ENCODE measurements at regions of chr2 and their contacts with region 1.

Region 1: GRCh38 chr2:25951071-25951547 is 31.2 kb downstream of the KIF3C start:
- DNase-seq: peak; percentile 78
- ATAC-seq: peak; percentile 85
- H3K4me3 ChIP-seq: no peak overlapping the region
- H3K4me3 Mint-ChIP-seq: no peak overlapping the region
- H3K27ac ChIP-seq: no peak overlapping the region
- H3K27ac Mint-ChIP-seq: no peak overlapping the region
- H3K4me1 ChIP-seq: no peaks in the 10 kb centered on the region
- H3K4me1 Mint-ChIP-seq: no peaks in the 10 kb centered on the region
- H3K27me3 ChIP-seq: no peaks in the 10 kb centered on the region
- H3K27me3 Mint-ChIP-seq: no peaks in the 10 kb centered on the region
- CTCF ChIP-seq: peak; percentile 92

Region 2: GRCh38 chr2:25115902-25116301 is 835.2 kb before region 1 on chr2:
- CTCF ChIA-PET with region 1: no interaction called
- POLR2A ChIA-PET with region 1: no interaction called
- intact Hi-C with region 1: no loop called
- DNase-seq: no peak
- ATAC-seq: no peak
- H3K4me3 ChIP-seq: no peak overlapping the region
- H3K4me3 Mint-ChIP-seq: no peak overlapping the region
- H3K27ac ChIP-seq: no peak overlapping the region
- H3K27ac Mint-ChIP-seq: no peak overlapping the region
- H3K4me1 ChIP-seq: no peaks in the 10 kb centered on the region
- H3K4me1 Mint-ChIP-seq: no peaks in the 10 kb centered on the region
- H3K27me3 ChIP-seq: no peaks in the 10 kb centered on the region
- H3K27me3 Mint-ChIP-seq: peaks cover 4% of the 10 kb centered on the region
- CTCF ChIP-seq: no peak

Region 3: DNA sequence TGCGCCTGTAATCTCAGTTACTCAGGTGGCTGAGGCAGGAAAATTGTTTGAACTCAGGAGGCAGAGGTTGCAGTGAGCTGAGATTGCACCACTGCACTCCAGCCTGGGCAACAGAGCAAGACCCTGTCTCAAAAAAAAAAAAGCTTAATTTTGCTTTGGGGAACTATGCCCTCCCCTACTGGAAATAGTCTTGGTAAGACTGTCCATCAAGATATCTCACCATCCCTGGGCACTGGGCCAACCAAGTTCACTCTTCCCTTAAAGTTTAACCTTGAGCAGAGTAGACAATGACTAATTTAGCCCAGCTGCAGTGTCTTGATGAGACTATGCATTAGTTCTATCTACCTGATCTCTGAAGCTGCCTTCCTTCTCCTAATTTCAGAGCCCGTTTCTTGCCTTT is 117.5 kb before region 1 on chr2:
- CTCF ChIA-PET with region 1: no interaction called
- POLR2A ChIA-PET with region 1: no interaction called
- intact Hi-C with region 1: no loop called
- DNase-seq: no peak
- ATAC-seq: no peak
- H3K4me3 ChIP-seq: no peak overlapping the region
- H3K4me3 Mint-ChIP-seq: no peak overlapping the region
- H3K27ac ChIP-seq: no peak overlapping the region
- H3K27ac Mint-ChIP-seq: no peak overlapping the region
- H3K4me1 ChIP-seq: no peaks in the 10 kb centered on the region
- H3K4me1 Mint-ChIP-seq: peaks cover 10% of the 10 kb centered on the region
- H3K27me3 ChIP-seq: no peaks in the 10 kb centered on the region
- H3K27me3 Mint-ChIP-seq: no peaks in the 10 kb centered on the region
- CTCF ChIP-seq: no peak

Region 4: DNA sequence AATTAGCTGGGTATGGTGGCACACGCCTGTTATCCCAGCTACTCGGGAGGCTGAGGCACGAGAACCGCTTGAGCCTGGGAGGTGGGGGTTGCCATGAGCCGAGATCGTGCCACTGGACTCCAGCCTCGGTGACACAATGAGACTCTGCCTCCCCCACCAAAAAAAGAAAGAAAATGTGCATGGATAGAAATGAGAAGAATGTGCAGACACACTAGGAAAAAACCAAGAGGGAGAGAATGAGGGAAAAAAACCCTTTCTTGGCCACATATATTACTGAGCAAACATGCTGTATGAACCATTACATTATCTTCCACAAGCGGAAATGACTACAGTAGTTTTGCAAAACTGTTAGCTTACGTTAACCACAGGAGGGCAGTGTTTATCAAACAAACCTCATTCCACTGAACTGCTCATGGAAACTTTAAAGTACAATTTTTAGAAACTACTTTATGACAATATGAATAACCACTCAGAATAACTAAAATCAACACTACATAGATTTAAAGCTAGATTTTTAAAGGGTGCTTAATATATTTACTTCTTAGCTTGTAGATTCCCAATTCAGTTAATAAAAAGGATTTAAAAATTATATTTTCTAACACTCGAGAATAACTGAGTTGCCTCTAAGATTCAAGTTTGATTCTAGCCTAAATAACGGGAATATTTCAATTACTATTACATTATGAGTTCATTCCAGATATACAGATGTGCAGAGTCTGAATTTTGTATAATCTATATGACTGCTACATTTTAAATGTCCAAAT is 99.2 kb before region 1 on chr2:
- CTCF ChIA-PET with region 1: interaction called, 29 read pairs
- POLR2A ChIA-PET with region 1: no interaction called
- intact Hi-C with region 1: loop called (anchors 1 kb)
- DNase-seq: peak; percentile 71
- ATAC-seq: peak; percentile 95
- H3K4me3 ChIP-seq: no peak overlapping the region
- H3K4me3 Mint-ChIP-seq: peak overlapping the region; percentile 40
- H3K27ac ChIP-seq: peak overlapping the region in 1 of 2 donors; percentile 45
- H3K27ac Mint-ChIP-seq: peak overlapping the region; percentile 39
- H3K4me1 ChIP-seq: peaks cover 11 to 14% of the 10 kb centered on the region in 2 donors
- H3K4me1 Mint-ChIP-seq: peaks cover 32% of the 10 kb centered on the region
- H3K27me3 ChIP-seq: no peaks in the 10 kb centered on the region
- H3K27me3 Mint-ChIP-seq: no peaks in the 10 kb centered on the region
- CTCF ChIP-seq: peak; percentile 83

Region 5: GRCh38 chr2:25982273-25982967 is 31.3 kb after region 1 on chr2 and contains the start of gene KIF3C:
- CTCF ChIA-PET with region 1: interaction called, 3 read pairs
- POLR2A ChIA-PET with region 1: no interaction called
- intact Hi-C with region 1: loop called (anchors 1 kb)
- DNase-seq: peak; percentile 76
- ATAC-seq: peak; percentile 87
- H3K4me3 ChIP-seq: peak within 1 kb of the TSS; percentile 36 to 81 (median 70)
- H3K4me3 Mint-ChIP-seq: peak within 1 kb of the TSS; percentile 88
- H3K27ac ChIP-seq: peak within 1 kb of the TSS in 1 of 2 donors; percentile 53
- H3K27ac Mint-ChIP-seq: peak within 1 kb of the TSS; percentile 61
- H3K4me1 ChIP-seq: peaks cover 6 to 14% of the 10 kb centered on the region in 2 donors
- H3K4me1 Mint-ChIP-seq: peaks cover 8% of the 10 kb centered on the region
- H3K27me3 ChIP-seq: peaks cover 0 to 3% (median 0%) of the 10 kb centered on the region in 4 experiments
- H3K27me3 Mint-ChIP-seq: no peaks in the 10 kb centered on the region
- CTCF ChIP-seq: no peak
- total RNA-seq, gene KIF3C: 4.0 and 6.9 TPM in 2 replicates

Region 6: GRCh38 chr2:26144953-26145680 is 194.0 kb after region 1 on chr2:
- CTCF ChIA-PET with region 1: interaction called, 30 read pairs
- POLR2A ChIA-PET with region 1: interaction called, 5 read pairs
- intact Hi-C with region 1: loop called (anchors 1 kb)
- DNase-seq: peak; percentile 69
- ATAC-seq: peak; percentile 73
- H3K4me3 ChIP-seq: no peak overlapping the region
- H3K4me3 Mint-ChIP-seq: peak overlapping the region; percentile 24
- H3K27ac ChIP-seq: no peak overlapping the region
- H3K27ac Mint-ChIP-seq: no peak overlapping the region
- H3K4me1 ChIP-seq: no peaks in the 10 kb centered on the region
- H3K4me1 Mint-ChIP-seq: no peaks in the 10 kb centered on the region
- H3K27me3 ChIP-seq: peaks cover 0 to 3% (median 0%) of the 10 kb centered on the region in 4 experiments
- H3K27me3 Mint-ChIP-seq: peaks cover 10% of the 10 kb centered on the region
- CTCF ChIP-seq: peak; percentile 75

Region 7: GRCh38 chr2:26355038-26355995 is 404.2 kb after region 1 on chr2:
- CTCF ChIA-PET with region 1: no interaction called
- POLR2A ChIA-PET with region 1: no interaction called
- intact Hi-C with region 1: no loop called
- DNase-seq: no peak
- ATAC-seq: no peak
- H3K4me3 ChIP-seq: no peak overlapping the region
- H3K4me3 Mint-ChIP-seq: no peak overlapping the region
- H3K27ac ChIP-seq: no peak overlapping the region
- H3K27ac Mint-ChIP-seq: no peak overlapping the region
- H3K4me1 ChIP-seq: no peaks in the 10 kb centered on the region
- H3K4me1 Mint-ChIP-seq: peaks cover 21% of the 10 kb centered on the region
- H3K27me3 ChIP-seq: no peaks in the 10 kb centered on the region
- H3K27me3 Mint-ChIP-seq: no peaks in the 10 kb centered on the region
- CTCF ChIP-seq: no peak

Region 8: DNA sequence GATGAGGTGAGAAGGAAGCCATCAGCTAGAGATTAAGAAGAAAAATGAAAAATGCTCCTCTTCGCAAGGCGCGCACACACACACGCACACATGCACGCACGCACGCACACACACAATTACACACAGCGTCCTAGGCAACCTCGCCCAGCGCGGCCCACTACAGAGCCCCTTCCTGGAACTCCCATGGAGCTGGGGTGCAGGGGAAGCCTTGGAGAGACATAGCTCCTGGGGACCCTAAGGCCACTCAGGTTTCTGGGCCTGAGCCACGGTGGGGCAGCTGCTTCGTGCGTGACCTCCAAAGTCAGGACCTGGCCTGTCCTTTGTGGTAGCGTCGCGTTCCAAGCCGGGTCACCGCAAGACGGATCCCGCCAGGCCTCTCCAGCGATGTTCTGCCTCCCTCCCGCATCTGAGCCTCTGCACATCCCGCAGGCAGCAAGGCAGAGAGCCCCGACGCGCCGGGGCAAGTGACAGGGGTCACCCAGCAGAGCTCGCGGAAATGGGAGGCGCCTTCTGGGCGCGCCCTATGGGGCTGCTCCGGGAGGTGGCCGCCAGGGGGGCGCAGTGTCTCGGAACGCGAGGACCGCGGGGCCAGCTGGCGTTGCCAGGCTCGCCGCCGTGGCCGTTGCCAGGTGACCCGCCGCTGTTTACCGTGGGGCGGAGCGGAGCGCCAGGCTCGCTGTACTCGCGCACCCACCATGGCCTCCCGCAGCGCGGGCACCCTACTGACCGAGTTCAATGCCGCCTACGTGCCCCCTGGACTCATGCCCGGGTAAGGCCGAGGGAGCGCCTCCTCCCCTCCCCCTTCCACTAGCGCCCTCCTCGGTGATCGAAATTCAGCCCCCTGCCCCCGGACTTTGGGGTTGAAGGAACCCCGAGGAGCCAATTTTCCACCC is 611.1 kb after region 1 on chr2:
- CTCF ChIA-PET with region 1: no interaction called
- POLR2A ChIA-PET with region 1: no interaction called
- intact Hi-C with region 1: no loop called
- DNase-seq: no peak
- ATAC-seq: no peak
- H3K4me3 ChIP-seq: no peak overlapping the region
- H3K4me3 Mint-ChIP-seq: peak overlapping the region; percentile 47
- H3K27ac ChIP-seq: no peak overlapping the region
- H3K27ac Mint-ChIP-seq: no peak overlapping the region
- H3K4me1 ChIP-seq: peaks cover 4 to 11% of the 10 kb centered on the region in 2 donors
- H3K4me1 Mint-ChIP-seq: peaks cover 3% of the 10 kb centered on the region
- H3K27me3 ChIP-seq: peaks cover 0 to 38% (median 13%) of the 10 kb centered on the region in 4 experiments
- H3K27me3 Mint-ChIP-seq: peaks cover 68% of the 10 kb centered on the region
- CTCF ChIP-seq: no peak

Region 9: GRCh38 chr2:26577434-26578112 is 626.5 kb after region 1 on chr2:
- CTCF ChIA-PET with region 1: interaction called, 16 read pairs
- POLR2A ChIA-PET with region 1: no interaction called
- intact Hi-C with region 1: no loop called
- DNase-seq: peak; percentile 67
- ATAC-seq: peak; percentile 88
- H3K4me3 ChIP-seq: no peak overlapping the region
- H3K4me3 Mint-ChIP-seq: no peak overlapping the region
- H3K27ac ChIP-seq: no peak overlapping the region
- H3K27ac Mint-ChIP-seq: no peak overlapping the region
- H3K4me1 ChIP-seq: no peaks in the 10 kb centered on the region
- H3K4me1 Mint-ChIP-seq: peaks cover 2% of the 10 kb centered on the region
- H3K27me3 ChIP-seq: peaks cover 0 to 16% (median 0%) of the 10 kb centered on the region in 4 experiments
- H3K27me3 Mint-ChIP-seq: peaks cover 48% of the 10 kb centered on the region
- CTCF ChIP-seq: peak; percentile 99

Region 10: DNA sequence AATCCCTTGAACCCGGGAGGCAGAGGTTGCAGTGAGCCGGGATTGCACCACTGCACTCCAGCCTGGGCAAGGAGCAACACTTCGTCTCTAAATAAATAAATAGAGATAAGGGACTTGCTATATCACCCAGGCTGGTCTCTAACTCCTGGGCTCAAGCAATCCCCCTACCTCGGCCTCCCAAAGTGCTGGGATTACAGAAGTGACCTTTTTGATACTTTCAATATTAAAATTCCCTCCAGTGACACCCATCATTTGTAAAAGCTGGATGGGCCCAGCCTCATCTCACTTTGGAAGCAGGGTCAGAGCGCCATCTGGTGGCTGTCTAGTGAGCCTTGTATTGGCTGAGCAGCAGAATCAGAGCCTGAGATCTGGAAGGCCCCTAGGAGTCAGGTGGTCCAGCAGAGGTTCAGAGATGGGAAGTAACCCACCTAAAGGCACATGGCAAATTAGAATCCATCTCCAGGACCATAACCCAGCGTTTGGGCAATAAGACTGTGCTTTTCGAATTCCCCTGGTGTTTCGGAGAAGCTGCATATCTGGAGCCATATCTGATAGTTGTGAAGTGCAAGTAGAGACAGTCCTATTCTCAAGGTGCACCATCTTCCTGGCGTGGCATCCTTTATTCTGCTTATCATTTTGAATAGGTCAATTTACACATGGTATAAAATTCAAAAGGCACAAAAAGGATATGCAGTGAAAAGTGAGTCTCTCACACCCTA is 794.7 kb after region 1 on chr2:
- CTCF ChIA-PET with region 1: interaction called, 3 read pairs
- POLR2A ChIA-PET with region 1: no interaction called
- intact Hi-C with region 1: loop called (anchors 5 kb)
- DNase-seq: peak; percentile 79
- ATAC-seq: peak; percentile 73
- H3K4me3 ChIP-seq: no peak overlapping the region
- H3K4me3 Mint-ChIP-seq: no peak overlapping the region
- H3K27ac ChIP-seq: no peak overlapping the region
- H3K27ac Mint-ChIP-seq: no peak overlapping the region
- H3K4me1 ChIP-seq: no peaks in the 10 kb centered on the region
- H3K4me1 Mint-ChIP-seq: peaks cover 12% of the 10 kb centered on the region
- H3K27me3 ChIP-seq: no peaks in the 10 kb centered on the region
- H3K27me3 Mint-ChIP-seq: peaks cover 3% of the 10 kb centered on the region
- CTCF ChIP-seq: peak; percentile 92